ENCODE measurements at regions of chr19 and their contacts with region 1.

Region 1: GRCh38 chr19:2475702-2476450 is at the start of gene GADD45B:
- DNase-seq: peak; percentile 98
- ATAC-seq: peak; percentile 86
- total RNA-seq, gene GADD45B: 39.8 TPM

Region 2: GRCh38 chr19:2424685-2425621 is 50.9 kb before region 1 on chr19:
- intact Hi-C with region 1: no loop called
- DNase-seq: no peak
- ATAC-seq: no peak

Region 3: GRCh38 chr19:2446271-2446779 is 29.6 kb before region 1 on chr19:
- intact Hi-C with region 1: no loop called
- DNase-seq: no peak
- ATAC-seq: no peak

Region 4: GRCh38 chr19:2494444-2495129 is 18.7 kb after region 1 on chr19:
- intact Hi-C with region 1: loop called (anchors 2 kb)
- DNase-seq: peak; percentile 88
- ATAC-seq: peak; percentile 80

Region 5: DNA sequence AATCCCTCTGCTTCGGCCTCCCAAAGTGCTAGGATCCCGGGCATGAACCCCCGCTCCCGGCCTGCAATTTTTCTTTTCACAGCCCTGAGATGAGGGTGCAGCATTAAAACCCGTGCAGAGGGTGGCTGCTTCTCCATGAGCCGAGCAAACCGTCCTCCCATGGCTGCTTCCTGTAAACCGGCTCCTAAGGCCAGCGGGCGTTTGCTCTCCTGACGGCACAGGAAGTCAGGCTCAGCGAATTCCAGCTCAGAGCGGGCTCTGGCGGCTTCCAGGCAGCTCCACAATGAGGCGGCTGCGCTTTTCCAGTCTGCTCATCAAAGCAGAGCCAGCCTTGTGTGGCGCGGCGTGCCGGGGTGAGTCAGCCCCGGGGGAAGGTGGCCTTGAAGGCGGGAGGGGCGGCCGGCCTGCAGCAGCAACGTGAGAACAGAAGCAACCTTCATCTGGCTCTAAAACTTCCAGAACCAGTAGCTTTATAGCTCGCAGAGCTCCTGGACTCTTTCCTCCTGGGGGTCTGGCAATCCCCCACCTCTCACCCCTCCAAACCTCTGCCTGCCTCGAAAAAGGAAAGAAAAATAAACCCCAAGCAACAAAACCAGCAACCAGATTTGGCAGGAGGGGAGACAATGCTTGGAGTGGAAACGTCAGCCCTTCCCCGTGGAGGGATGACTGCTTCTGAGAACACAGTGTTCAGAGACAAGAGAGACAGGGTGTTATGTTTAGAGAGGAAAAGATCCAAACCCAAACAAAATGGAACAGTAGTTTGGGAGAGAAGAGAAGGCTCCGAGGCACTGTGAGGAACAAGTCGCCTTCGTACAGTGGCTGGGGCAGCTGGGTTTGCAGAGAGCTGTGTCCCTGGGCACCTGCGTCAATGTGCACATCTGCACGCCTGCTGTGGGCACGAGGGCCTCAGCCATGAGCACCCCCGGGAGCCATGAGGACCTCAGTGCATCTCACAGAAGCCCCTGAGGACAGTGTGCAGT is 67.9 kb after region 1 on chr19:
- intact Hi-C with region 1: loop called (anchors 1 kb)
- DNase-seq: peak; percentile 96
- ATAC-seq: peak; percentile 81

Region 6: DNA sequence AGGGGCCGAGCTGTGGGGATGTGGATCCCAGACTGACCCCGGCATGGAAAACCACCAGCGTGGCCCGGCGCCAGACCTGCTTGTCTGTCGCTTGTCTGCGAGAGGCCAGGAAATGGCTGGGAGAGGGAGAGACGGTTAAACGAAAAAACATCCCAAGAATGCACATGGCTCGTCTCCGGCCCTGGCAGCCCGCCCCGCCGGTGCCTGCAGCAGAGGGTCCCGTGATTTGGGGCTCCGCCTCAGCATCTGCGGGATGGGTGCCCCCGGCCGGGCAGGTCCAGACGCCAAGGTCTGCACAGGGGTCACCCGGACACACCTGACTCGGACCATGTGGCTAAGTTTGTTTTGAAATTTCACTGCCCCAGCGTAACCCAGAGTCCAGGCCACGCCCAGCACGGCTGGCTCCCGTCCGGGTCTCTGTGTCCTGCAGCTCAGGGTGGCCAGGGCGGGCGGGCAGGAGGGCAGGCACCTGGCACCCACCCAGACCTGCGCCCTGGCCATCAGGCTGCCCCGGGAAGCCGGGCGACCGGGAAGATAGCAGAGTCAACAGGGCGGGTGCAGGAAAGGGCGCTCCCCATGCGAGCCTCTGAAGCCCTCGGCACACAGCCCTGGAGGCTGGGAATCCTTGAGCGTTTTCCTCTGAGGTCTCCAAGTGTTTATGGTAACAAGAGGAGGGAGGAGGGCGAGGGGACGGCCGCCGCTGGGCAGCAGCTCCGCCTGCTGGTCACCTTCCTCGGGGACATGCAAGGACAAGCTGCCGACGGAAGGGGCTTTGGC is 103.2 kb after region 1 on chr19:
- intact Hi-C with region 1: loop called (anchors 1 kb)
- DNase-seq: peak; percentile 93
- ATAC-seq: peak; percentile 82

Region 7: GRCh38 chr19:2610637-2611482 is 135.0 kb after region 1 on chr19:
- intact Hi-C with region 1: loop called (anchors 1 kb)
- DNase-seq: peak; percentile 95
- ATAC-seq: peak; percentile 90

Region 8: DNA sequence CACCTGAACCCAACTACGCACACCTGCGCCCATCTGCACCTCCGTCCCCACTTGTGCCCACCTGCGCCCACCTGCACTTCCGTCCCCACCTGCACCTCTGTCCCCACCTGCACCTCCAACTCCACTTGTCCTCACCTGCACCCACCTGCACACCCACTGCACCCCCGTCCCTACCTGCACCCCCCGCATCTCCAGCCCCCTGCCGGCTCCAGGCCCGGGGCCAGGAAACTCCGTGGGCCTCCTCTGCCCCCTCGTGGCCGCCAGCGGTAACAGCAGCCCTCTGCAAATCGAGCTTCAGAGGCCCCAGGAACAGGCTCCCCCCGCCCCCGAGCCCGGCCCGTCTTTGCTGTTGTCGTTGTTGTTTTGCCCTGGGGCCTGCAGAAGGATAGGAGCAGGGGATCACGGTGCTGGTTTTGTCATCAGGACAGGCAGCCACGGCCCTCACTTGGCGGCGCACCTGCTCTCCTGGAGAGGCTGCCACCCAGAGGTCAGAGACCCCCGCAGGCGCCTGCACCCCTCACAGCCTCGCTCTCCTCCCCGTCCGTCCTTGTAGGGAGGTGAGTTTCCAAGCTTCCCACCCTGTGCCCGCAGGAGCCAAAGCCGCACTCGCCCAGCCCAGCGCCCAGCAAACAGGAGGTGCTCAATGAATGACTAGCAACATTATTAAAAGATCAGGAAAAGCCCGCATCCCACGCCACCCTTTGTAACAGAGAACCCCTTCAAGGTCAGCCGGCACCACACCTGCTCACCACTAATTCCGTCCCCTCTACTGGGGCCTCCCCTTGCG is 161.2 kb after region 1 on chr19:
- intact Hi-C with region 1: loop called (anchors 1 kb)
- DNase-seq: peak; percentile 91
- ATAC-seq: peak; percentile 26